ENCODE measurements at regions of chr11 and their contacts with region 1.

Region 1: GRCh38 chr11:57644748-57645688 is 4.7 kb downstream of the YPEL4 start:
- H3K4me3 Mint-ChIP-seq: no peak overlapping the region
- H3K27ac Mint-ChIP-seq: no peak overlapping the region
- H3K4me1 Mint-ChIP-seq: peaks cover 69% of the 10 kb centered on the region
- H3K27me3 Mint-ChIP-seq: peaks cover 38% of the 10 kb centered on the region

Region 2: GRCh38 chr11:56817661-56818060 is 827.4 kb before region 1 on chr11:
- intact Hi-C with region 1: no loop called
- H3K4me3 Mint-ChIP-seq: no peak overlapping the region
- H3K27ac Mint-ChIP-seq: no peak overlapping the region
- H3K4me1 Mint-ChIP-seq: no peaks in the 10 kb centered on the region
- H3K27me3 Mint-ChIP-seq: no peaks in the 10 kb centered on the region

Region 3: DNA sequence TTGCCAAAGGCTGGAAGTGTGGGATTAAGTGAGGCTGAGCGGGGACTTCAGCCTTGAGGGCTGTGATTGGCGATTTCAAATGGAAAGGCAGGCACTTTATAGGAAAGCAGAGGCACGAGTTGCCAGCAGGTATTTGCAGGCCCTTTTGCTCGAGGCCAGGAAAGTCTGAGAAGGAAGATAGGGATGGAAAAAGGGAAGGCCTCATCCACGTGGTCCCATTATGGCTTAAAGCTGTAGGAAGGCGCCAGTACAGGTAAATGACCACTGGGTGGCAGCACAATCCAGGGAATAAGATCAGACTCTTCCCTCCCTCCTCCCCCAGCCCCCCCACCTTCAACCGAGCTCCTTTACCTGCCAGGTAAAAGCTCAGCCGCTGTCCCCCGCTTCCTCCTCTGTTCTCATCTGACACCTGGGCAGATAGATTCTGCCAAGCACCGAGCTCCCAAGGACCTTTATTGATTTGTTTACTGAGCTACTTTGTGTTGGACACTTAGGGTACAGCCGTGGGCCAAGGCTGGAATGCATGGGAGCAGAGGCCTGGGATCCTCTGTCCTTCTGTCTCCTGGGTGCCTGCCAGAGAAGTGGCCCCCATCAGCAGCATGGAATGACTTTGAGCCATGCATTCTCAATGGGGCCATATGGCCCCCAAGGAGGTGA is 299.3 kb before region 1 on chr11:
- intact Hi-C with region 1: loop called (anchors 2 kb)
- H3K4me3 Mint-ChIP-seq: no peak overlapping the region
- H3K27ac Mint-ChIP-seq: no peak overlapping the region
- H3K4me1 Mint-ChIP-seq: peaks cover 8% of the 10 kb centered on the region
- H3K27me3 Mint-ChIP-seq: peaks cover 10% of the 10 kb centered on the region

Region 4: DNA sequence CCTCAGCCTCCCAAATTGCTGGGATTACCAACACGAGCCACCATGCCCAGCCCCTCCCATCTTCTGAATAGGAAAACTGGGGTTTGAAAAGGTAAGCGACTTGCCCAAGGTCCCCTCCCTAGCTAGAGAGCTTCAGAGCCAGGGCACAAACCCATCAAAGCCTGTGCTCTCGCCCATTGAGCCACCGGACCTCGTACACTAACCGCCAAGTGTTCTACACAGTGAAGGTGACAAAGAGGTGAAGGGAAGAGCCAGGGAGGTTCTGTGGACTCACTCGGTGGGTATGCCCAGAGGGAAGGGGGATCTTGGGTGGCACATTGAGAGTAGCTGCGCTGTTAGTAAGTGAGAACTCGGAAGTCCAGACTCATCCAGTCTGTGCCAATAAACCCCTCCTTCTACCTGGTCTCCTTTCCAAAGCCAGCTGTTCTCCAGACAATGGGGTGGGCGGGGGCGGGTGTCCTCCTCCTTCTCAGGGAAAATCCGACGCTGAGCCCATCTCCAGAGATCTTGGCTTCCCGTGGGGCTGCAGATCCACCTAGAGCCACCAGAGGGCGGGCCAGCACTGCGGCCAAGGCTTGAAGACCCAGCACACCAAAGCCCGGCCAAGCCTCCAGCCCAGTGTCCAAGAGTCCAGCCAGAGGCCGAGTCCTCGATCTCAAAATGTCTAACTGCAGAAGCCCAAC is 187.9 kb before region 1 on chr11:
- intact Hi-C with region 1: loop called (anchors 2 kb)
- H3K4me3 Mint-ChIP-seq: no peak overlapping the region
- H3K27ac Mint-ChIP-seq: no peak overlapping the region
- H3K4me1 Mint-ChIP-seq: peaks cover 31% of the 10 kb centered on the region
- H3K27me3 Mint-ChIP-seq: peaks cover 43% of the 10 kb centered on the region

Region 5: DNA sequence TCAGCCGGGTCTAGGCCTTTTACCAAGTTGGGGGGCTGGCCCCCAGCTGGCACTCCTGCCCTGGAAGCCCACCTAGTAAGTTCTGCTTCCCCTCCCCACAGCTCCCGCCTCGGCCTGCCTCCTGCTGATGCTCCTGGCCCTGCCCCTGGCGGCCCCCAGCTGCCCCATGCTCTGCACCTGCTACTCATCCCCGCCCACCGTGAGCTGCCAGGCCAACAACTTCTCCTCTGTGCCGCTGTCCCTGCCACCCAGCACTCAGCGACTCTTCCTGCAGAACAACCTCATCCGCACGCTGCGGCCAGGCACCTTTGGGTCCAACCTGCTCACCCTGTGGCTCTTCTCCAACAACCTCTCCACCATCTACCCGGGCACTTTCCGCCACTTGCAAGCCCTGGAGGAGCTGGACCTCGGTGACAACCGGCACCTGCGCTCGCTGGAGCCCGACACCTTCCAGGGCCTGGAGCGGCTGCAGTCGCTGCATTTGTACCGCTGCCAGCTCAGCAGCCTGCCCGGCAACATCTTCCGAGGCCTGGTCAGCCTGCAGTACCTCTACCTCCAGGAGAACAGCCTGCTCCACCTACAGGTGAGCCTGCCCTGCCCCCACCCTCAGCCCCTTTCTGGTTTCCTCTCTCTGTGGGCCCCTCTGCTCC is 177.4 kb before region 1 on chr11:
- intact Hi-C with region 1: no loop called
- H3K4me3 Mint-ChIP-seq: no peak overlapping the region
- H3K27ac Mint-ChIP-seq: no peak overlapping the region
- H3K4me1 Mint-ChIP-seq: peaks cover 15% of the 10 kb centered on the region
- H3K27me3 Mint-ChIP-seq: peaks cover 8% of the 10 kb centered on the region

Region 6: DNA sequence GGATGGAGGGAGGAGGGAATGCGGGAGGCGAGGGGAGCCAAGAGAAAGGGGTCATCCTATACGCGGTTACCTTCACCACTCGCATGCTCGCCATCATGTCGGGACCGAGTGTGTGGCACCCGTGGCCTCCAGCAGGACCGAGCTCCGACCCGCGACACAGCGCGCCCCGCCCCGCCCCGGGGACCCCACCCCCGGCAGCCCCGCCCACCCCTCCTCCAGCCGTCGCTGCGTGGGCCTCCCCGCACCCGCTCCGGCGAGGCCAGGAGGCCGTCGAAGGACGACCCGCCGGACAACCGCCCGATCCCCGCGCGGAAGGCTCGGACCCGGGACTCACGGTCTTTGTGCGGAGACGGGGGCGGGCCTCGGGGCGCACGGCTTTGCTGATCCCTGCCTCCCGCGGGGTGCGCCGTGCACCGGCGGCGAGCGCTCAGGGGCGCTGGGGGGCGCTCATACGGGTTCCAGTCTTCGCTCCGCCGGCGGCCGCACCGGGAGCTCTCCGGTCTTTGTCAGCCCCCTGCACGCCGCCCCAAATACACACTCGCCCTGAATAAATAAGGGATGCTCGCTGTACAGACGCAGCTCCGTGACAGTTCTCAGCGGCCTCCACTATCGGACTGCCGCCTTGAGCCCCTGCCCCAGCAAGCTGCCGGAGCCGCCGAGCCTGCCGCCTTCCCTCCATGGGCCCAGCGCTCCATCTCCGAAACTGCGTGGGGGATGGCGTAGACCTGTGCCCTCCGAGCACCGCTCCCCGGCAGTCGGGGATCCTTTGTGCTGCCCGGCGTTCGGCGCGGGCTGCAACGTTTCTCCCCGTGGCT is 77.3 kb before region 1 on chr11 and contains the start of gene UBE2L6:
- intact Hi-C with region 1: loop called (anchors 1 kb)
- H3K4me3 Mint-ChIP-seq: peak within 1 kb of the TSS; percentile 91
- H3K27ac Mint-ChIP-seq: peak within 1 kb of the TSS; percentile 82
- H3K4me1 Mint-ChIP-seq: peaks cover 68% of the 10 kb centered on the region
- H3K27me3 Mint-ChIP-seq: no peaks in the 10 kb centered on the region

Region 7: DNA sequence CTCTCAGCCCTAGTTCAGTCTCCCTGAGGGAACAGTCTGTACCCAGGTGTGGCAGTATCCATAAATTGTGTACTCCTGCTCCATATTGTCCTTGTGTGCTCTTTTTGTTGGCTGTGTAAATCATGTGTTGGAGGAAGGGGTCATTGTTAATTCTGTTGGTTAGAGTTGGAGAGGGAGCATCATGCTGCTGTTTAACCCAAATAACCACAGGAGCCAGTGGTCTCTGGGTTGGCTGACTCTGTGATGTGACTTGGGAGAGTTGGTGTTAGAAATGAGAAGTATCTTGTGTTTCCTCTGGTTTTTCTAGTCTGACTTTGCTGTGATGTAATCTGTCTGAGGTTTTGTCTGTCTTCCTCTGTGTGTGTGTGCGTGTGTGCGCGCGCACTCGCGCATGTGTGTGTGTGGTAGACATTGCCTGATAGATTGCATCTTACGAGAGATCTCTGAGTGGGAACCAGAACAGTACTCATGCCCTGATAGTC is 147.1 kb after region 1 on chr11:
- intact Hi-C with region 1: loop called (anchors 10 kb)
- H3K4me3 Mint-ChIP-seq: peak overlapping the region; percentile 52
- H3K27ac Mint-ChIP-seq: peak overlapping the region; percentile 95
- H3K4me1 Mint-ChIP-seq: peaks cover 79% of the 10 kb centered on the region
- H3K27me3 Mint-ChIP-seq: no peaks in the 10 kb centered on the region